Astrocyte of the cerebellum (primary cell): ENCODE measurements at regions of chr5 and their contacts with region 1.

Region 1: DNA sequence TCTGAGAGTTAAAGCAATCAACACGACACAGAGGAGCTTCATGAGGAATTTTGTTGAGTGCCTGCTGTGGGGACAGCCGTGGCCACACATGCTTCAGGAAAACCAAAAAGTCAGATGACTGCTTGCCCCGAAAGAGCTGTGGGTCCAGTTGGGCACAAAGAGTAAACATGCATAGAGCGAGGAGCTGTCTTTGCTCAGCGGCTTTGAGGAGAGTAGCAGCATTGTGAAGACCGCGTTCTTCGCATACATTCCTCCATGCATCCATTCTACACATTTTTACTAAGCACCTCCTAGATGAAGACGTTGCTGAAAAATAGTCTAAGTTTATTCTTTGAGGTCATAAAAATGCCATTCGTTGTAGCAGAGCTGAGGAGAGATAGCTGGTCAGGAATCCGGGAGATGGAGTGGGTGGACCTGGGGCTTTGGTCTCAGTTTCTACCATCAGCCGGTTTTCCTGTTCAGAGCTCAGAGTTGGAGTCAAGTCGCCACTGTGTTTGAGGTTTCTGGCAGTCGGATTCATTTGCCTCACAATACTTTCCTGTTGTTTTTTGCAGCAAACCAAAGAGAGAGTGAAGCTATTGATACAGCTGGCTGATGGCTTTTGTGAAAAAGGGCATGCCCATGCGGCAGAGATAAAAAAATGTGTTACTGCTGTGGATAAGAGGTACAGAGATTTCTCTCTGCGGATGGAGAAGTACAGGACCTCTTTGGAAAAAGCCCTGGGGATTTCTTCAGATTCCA is 194.5 kb upstream of the OTULINL start:
- DNase-seq: no peak
- H3K4me3 ChIP-seq: no peak overlapping the region
- CTCF ChIP-seq: no peak

Region 2: DNA sequence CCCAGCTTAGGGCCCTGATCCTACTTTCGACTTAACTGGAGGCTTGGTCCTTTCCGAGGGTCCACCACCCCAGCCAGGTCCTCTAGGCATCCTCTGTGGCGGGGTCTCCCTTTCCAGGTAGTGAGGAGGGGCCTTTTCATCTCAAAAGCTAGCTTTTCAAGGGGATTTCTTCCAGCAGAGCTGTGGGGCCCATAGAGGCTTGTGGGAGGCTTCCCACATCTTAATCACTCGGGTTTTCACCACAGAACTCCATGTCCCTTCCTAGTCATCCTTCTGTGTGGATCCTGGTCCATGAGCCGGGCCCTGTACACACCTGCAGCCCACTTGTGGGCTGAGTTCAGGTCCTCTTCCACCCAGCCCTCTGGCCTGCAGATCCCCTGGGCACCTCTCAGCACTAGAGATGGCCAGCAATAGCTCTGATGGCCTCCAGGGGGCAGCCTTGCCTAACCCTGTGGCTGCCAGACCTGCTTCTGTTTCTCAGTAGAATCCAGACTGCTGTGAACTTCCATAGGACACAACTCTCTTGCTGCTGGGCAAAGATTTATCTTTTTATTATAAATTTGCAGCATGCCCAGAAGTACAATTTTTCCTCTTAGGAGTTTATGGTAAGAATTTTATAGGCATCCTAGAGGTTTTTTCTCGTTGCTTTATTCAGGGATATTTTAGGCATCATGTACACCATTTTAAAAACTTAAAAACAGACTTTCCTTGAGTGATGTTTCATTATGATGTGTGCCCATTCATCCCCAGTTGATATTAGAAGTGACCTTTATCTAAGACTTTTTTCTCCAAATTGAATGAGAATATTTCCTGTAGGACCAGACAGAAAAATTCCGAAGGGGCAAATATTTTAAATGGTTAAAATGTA is 35.0 kb before region 1 on chr5:
- in situ Hi-C with region 1: loop called (anchors 5 kb)
- DNase-seq: peak; percentile 35
- H3K4me3 ChIP-seq: no peak overlapping the region
- CTCF ChIP-seq: peak; percentile 99

Region 3: DNA sequence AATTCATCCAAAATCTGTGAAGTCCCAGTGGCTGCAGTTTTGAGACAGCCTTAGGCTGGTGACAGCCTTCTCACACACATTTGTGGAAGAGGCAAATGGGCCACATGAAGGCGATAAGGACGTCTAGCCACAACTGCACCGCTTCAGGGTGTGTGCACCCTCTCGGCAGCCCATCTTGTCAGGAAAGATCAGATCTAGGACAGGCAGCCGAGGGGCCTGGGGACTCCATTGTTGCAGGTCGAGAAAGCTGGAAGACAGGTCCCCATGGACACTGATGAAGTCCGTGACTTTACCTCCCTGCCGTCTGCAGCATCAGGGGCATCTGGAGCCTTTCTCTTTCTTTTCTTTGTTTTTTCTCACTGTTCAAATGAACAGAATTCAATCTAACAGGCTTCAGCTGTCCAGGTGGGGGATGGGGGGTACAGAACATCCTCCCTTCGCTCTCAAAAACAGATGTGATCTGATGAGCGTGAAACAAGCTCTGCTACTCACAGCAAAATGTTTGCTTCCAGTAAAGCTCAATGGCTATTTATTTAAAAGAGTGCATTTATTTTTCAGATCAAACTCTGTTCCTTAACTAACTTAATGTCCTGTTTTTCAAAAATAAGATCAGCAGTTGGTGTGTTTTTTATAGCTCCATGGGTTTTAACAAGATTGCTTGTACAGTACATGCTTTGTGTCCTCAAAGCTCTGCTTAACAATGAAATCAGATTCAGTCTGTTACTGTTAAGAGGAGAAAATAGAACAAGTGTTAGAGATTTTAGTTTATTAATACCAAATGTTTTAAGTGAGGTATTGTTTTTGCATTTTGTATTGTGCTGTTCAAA is 82.7 kb after region 1 on chr5:
- in situ Hi-C with region 1: loop called (anchors 5 kb)
- DNase-seq: no peak
- H3K4me3 ChIP-seq: no peak overlapping the region
- CTCF ChIP-seq: no peak

Region 4: GRCh38 chr5:15365070-15365469 is 978.0 kb after region 1 on chr5:
- in situ Hi-C with region 1: no loop called
- DNase-seq: no peak
- H3K4me3 ChIP-seq: no peak overlapping the region
- CTCF ChIP-seq: no peak

Region 5: DNA sequence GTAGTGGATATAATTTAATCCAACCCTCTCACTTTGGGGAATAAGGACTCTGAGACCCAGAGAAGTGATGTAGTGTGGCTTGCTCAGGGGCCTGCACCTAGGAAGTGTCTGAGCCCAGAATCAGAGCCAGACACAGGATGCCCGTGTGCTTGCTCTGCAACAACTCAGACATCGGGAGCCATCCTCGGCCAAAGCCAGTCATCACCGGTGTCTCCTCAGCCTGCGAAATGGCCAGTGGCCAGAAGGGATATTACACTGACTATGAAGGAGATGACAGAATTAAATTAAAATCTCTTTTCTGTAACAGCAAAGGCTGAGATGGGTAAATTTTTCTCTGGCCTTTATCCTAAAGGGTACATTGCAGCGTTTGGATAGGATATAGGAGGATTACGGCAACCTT is 1689.6 kb after region 1 on chr5:
- in situ Hi-C with region 1: no loop called
- DNase-seq: no peak
- H3K4me3 ChIP-seq: no peak overlapping the region
- CTCF ChIP-seq: no peak